ENCODE measurements at regions of chr11 and their contacts with region 1.

Region 1: DNA sequence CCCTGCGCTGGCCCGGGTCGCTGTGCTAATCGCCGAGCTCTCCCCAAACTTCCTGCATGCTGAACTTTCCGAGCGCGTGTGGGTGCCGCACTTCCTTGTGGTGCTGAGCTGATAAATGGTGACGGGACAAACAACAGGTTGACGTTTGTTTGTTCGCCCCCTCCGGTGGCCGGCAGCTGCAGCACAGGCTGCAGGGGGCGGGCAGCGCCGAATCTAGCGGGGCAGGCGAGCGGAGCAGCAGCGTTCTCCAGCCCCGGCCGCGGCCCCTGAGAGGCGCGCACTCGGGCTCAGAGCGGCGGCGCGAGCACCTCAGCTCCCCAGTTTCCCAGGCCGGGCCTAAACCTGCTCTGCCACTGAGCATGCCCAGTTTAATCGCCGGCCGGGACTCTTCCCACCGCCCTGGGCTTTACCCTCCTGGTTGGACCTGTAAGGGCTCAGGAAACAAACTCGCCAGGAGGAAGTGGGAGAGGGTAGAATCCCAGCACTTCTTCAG is at the start of gene PDGFD:
- DNase-seq: peak; percentile 24
- H3K4me3 ChIP-seq: peak within 1 kb of the TSS; percentile 67
- CTCF ChIP-seq: peak; percentile 65

Region 2: GRCh38 chr11:103806130-103806900 is 357.8 kb before region 1 on chr11:
- in situ Hi-C with region 1: loop called (anchors 10 kb)
- DNase-seq: peak; percentile 82
- H3K4me3 ChIP-seq: no peak overlapping the region
- CTCF ChIP-seq: no peak

Measured in astrocyte of the cerebellum (primary cell).